ENCODE measurements at regions of chr1 and their contacts with region 1.

Region 1: GRCh38 chr1:108590957-108591356 is 31.1 kb downstream of the EEIG2 start:
- DNase-seq: peak in 1 of 2 donors; percentile 86
- ATAC-seq: peak; percentile 71 to 84 (median 84)
- H3K4me3 ChIP-seq: no peak overlapping the region
- H3K4me3 Mint-ChIP-seq: peak overlapping the region; percentile 64
- H3K27ac ChIP-seq: peak overlapping the region; percentile 88
- H3K27ac Mint-ChIP-seq: peak overlapping the region; percentile 88 to 91
- H3K4me1 ChIP-seq: peaks cover 14% of the 10 kb centered on the region
- H3K4me1 Mint-ChIP-seq: peaks cover 49 to 53% of the 10 kb centered on the region in 2 donors
- H3K27me3 ChIP-seq: no peaks in the 10 kb centered on the region
- H3K27me3 Mint-ChIP-seq: no peaks in the 10 kb centered on the region
- CTCF ChIP-seq: no peak

Region 2: DNA sequence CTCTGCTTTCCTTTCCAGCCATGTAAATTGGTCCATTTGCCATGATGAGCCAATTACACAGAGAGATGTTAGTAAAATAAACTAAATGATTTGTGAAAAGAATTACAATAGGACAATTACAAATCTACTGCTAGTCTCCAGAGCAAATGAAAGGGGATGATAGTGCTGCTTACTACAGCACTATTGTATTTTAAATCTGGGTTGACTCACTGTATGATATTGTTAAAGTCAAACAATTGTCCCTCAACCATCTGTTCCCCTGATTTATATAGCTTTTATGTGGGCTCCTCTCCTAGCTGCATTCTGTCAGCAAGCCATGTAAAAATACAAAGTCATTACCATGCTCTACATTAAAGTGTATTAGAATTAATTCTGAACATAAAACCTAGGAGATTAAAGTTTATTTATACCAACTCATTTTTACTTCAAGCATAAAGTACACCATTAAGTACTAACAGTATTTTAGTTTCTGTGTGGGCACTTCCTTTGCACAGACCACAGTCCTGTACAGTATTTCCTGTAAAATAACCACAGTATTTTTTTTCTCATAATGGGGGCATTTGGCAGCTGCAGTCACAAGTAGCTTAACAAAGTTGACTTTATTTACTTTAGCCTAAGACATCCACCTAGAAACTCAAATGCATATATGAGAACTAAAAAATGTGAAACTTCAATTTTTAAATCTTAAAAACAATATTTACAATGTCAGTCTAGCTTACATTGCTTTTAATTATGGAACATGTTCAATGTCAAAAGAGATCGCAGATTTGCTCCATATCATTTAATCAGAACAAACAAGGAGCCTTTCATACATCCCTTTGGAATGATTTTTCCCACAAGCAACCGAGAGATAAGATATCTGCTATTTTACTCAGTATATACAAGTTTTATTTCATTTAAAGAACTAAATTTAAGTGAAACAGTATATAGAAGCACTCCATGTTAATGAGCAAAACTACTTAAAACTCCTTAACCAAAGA is 761.6 kb before region 1 on chr1:
- intact Hi-C with region 1: loop called (anchors 5 kb)
- DNase-seq: peak in 1 of 2 donors; percentile 56
- ATAC-seq: peak; percentile 82 to 96 (median 92)
- H3K4me3 ChIP-seq: no peak overlapping the region
- H3K4me3 Mint-ChIP-seq: peak overlapping the region; percentile 88
- H3K27ac ChIP-seq: peak overlapping the region; percentile 65
- H3K27ac Mint-ChIP-seq: peak overlapping the region; percentile 87 to 90
- H3K4me1 ChIP-seq: peaks cover 37% of the 10 kb centered on the region
- H3K4me1 Mint-ChIP-seq: peaks cover 82 to 88% of the 10 kb centered on the region in 2 donors
- H3K27me3 ChIP-seq: no peaks in the 10 kb centered on the region
- H3K27me3 Mint-ChIP-seq: no peaks in the 10 kb centered on the region
- CTCF ChIP-seq: no peak

Region 3: DNA sequence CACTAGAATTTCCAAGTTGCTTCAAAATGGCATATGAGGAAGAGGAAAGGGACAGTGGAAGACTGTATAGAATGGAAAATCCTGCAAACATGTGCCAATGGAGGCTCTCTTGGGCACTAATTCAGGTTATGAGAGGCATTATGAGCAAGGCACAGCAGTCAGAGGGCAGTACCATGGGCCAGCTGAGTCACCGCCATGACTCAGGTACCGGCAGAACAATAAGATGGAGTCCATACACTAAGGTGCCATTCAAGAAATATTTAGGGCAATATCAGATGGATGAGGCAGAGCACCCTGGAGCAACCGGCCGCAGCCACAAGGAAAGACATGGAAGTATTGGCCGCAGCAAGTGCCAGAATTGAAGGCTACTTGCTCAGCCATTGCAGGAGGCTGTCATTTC is 600.4 kb before region 1 on chr1:
- intact Hi-C with region 1: no loop called
- DNase-seq: no peak
- ATAC-seq: no peak
- H3K4me3 ChIP-seq: no peak overlapping the region
- H3K4me3 Mint-ChIP-seq: no peak overlapping the region
- H3K27ac ChIP-seq: no peak overlapping the region
- H3K27ac Mint-ChIP-seq: no peak overlapping the region
- H3K4me1 ChIP-seq: no peaks in the 10 kb centered on the region
- H3K4me1 Mint-ChIP-seq: peaks cover 12 to 22% of the 10 kb centered on the region in 2 donors
- H3K27me3 ChIP-seq: no peaks in the 10 kb centered on the region
- H3K27me3 Mint-ChIP-seq: peaks cover 0 to 2% of the 10 kb centered on the region in 2 donors
- CTCF ChIP-seq: no peak

Region 4: DNA sequence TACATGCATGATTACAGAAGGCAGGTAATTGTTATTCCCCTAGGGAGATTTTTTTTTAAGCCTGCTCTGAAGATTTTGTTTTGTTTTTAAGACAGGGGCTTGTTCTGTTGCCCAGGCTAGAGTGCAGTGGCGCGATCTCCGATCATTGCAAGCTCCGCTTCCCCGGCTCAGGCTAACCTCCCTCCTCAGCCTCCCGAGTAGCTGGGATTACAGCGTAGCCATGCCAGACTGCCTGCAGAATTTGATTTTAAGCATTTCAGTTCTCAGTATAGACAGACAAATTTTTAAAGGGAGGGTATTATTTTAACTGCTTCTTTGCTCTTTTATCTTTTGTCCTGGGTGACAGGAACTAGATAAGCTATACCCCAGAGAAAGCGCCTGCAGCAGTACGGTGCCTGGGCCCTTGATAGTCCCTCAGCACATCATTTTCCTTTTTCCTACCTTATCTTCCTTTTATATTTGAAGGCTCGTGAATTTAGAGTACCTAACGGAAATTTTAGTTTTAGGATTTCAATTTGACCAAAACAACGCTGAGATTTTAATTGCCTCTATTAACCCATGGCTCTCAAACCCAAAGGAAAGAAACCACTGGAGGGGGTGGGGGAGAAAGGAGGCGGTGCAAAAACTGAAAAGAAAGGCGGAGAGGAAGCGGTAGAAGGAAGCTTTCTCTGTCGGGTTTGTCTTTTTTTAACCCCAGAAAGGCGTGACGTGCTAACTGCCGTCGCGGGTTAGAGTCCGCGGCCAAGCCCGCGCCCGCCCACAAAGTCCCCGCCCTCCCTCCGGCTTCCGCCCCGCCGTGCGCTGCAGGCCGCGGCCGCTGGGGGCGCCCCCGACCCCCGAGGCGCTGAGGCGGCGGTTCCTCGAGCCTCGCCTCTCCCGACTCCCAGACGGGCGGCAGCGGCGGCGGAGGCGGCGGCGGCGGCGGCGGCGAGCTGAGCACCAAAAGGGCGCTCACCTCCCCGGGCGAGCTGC is 31.5 kb before region 1 on chr1 and contains the start of gene EEIG2:
- intact Hi-C with region 1: loop called (anchors 1 kb)
- DNase-seq: peak; percentile 85 to 95
- ATAC-seq: peak; percentile 88 to 95 (median 91)
- H3K4me3 ChIP-seq: peak within 1 kb of the TSS; percentile 74
- H3K4me3 Mint-ChIP-seq: peak within 1 kb of the TSS; percentile 95
- H3K27ac ChIP-seq: peak within 1 kb of the TSS; percentile 52
- H3K27ac Mint-ChIP-seq: peak within 1 kb of the TSS; percentile 86 to 88
- H3K4me1 ChIP-seq: peaks cover 28% of the 10 kb centered on the region
- H3K4me1 Mint-ChIP-seq: peaks cover 30% of the 10 kb centered on the region in 2 donors
- H3K27me3 ChIP-seq: no peaks in the 10 kb centered on the region
- H3K27me3 Mint-ChIP-seq: no peaks in the 10 kb centered on the region
- CTCF ChIP-seq: peak; percentile 74
- total RNA-seq, gene EEIG2: 18.2 to 23.9 (median 20.3) TPM

Region 5: GRCh38 chr1:108570128-108570527 is 20.8 kb before region 1 on chr1:
- intact Hi-C with region 1: loop called (anchors 2 kb)
- DNase-seq: peak in 1 of 2 donors; percentile 69
- ATAC-seq: peak; percentile 89 to 94 (median 92)
- H3K4me3 ChIP-seq: no peak overlapping the region
- H3K4me3 Mint-ChIP-seq: no peak overlapping the region
- H3K27ac ChIP-seq: no peak overlapping the region
- H3K27ac Mint-ChIP-seq: no peak overlapping the region
- H3K4me1 ChIP-seq: peaks cover 5% of the 10 kb centered on the region
- H3K4me1 Mint-ChIP-seq: peaks cover under 1% of the 10 kb centered on the region in 2 donors
- H3K27me3 ChIP-seq: no peaks in the 10 kb centered on the region
- H3K27me3 Mint-ChIP-seq: no peaks in the 10 kb centered on the region
- CTCF ChIP-seq: peak; percentile 61

Region 6: GRCh38 chr1:108657356-108658080 is 66.6 kb after region 1 on chr1:
- intact Hi-C with region 1: no loop called
- DNase-seq: no peak
- ATAC-seq: no peak
- H3K4me3 ChIP-seq: no peak overlapping the region
- H3K4me3 Mint-ChIP-seq: no peak overlapping the region
- H3K27ac ChIP-seq: no peak overlapping the region
- H3K27ac Mint-ChIP-seq: peak overlapping the region; percentile 63 to 81
- H3K4me1 ChIP-seq: peaks cover 26% of the 10 kb centered on the region
- H3K4me1 Mint-ChIP-seq: peaks cover 48 to 66% of the 10 kb centered on the region in 2 donors
- H3K27me3 ChIP-seq: no peaks in the 10 kb centered on the region
- H3K27me3 Mint-ChIP-seq: no peaks in the 10 kb centered on the region
- CTCF ChIP-seq: no peak

Measured in natural killer cell (primary cell).